Activated CD8-positive, alpha-beta T cell treated with anti-CD3 and anti-CD28 coated beads, Interleukin-2, amount 10 ng/mL, durations not matched to agents 7 days and 5 days (primary cell): ENCODE measurements at regions of chr3 and their contacts with region 1.

Region 1: DNA sequence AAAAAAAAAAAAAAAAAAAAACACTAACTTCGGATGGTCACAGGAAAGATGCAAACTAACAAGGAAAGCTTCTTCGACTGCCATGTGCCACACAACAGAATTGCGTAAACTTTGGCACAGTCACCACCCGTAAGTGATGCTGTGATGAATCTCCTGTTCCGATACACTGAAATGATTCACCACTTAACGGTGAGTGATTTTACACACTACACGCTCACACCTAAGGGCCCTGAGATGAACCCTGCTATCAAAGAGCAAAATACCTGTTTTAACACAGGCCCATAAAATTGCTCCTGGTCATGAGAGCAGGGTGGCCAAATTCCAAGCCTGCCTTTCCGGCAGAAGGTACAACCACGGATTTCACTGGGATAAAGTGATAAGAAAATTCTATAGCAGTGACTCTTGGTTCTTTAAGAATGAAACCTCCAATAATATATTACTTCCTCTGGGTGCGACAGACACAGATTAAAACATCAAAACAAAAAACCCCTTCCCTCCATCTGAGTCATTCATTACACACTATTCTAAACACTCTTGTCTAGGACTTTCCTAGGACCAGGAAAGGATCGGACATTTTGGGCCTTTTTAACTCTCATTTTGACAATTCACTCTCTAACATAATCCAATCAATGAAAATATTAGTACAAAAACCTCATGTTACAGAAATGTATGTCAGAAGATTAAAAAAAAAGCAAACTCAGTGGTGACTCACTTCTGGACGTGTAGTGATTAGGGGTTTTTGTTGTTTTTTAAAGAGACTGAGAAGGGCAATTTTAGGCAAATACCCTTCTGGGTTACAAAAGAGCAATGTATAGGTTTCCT is 28.3 kb downstream of the LRIG1 start:
- DNase-seq: peak; percentile 24
- ATAC-seq: peak; percentile 61
- H3K4me3 Mint-ChIP-seq: peak overlapping the region; percentile 55
- H3K27ac Mint-ChIP-seq: peak overlapping the region; percentile 83
- H3K4me1 Mint-ChIP-seq: peaks cover 44% of the 10 kb centered on the region
- H3K27me3 Mint-ChIP-seq: no peaks in the 10 kb centered on the region

Region 2: GRCh38 chr3:66483406-66483906 is 10.9 kb after region 1 on chr3:
- CTCF ChIA-PET with region 1: interaction called, 17 read pairs
- POLR2A ChIA-PET with region 1: interaction called, 6 read pairs
- DNase-seq: no peak
- ATAC-seq: peak; percentile 59
- H3K4me3 Mint-ChIP-seq: peak overlapping the region; percentile 12
- H3K27ac Mint-ChIP-seq: no peak overlapping the region
- H3K4me1 Mint-ChIP-seq: peaks cover 85% of the 10 kb centered on the region
- H3K27me3 Mint-ChIP-seq: no peaks in the 10 kb centered on the region

Region 3: DNA sequence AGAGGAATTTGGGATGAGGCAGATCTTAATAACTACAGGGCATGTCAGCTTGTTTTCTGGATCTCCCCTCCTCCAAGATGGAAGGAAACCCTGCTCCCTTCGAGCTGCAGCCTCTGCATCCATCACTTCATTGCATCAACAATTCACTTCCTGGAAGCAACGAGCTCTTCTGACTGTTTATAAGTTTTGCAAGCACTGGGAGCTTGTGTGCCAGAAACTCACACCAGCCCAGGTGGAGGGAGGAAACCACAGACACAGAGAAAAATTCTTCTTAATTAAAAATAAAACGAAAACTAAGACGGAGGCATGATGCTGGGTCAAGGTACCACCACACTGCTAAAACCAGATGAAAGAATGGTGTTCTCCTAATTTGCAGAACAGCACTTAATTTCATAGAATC is 17.7 kb after region 1 on chr3:
- CTCF ChIA-PET with region 1: interaction called, 24 read pairs
- POLR2A ChIA-PET with region 1: interaction called, 6 read pairs
- DNase-seq: peak; percentile 48
- ATAC-seq: peak; percentile 64
- H3K4me3 Mint-ChIP-seq: peak overlapping the region; percentile 47
- H3K27ac Mint-ChIP-seq: peak overlapping the region; percentile 62
- H3K4me1 Mint-ChIP-seq: peaks cover 83% of the 10 kb centered on the region
- H3K27me3 Mint-ChIP-seq: peaks cover 3% of the 10 kb centered on the region